ENCODE measurements at regions of chr19 and their contacts with region 1.

Region 1: DNA sequence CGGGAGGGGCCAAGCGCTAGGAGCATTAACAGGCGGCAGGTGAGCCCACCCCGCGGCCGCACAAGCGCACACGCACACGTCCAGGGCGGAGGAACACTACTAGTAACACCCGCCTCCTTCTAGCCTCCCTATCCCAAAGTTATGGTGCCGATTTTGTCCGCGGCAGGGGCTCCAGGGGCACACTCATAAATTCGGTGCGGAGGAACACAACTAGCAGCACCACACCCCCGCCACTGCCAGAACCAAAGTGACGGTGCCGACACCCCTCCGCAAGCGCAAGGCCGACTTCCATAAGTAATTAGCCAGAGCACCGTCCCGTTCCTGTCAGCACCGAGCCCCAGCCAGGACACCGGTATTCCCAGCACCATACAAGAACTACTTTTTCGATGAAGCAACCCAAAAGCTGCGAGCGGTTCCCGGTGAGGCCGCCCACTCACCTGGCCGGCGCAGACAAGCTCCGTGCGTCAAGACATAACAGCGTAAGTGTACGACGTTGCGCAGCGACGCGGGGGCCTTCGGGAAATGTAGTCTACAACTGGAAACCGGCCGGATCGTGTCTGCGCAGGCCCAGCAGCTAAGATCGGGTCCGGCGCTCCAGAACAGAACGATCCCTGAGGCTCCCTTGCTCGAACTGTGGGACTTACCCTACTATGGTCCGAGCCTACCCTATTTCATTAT is at the starts of genes ZNF540 and ZNF571:
- DNase-seq: peak; percentile 83 to 96 (median 91)
- ATAC-seq: peak; percentile 91 to 94
- H3K4me3 Mint-ChIP-seq: peak within 1 kb of the TSS; percentile 93 to 99 (median 98)
- H3K27ac Mint-ChIP-seq: peak within 1 kb of the TSS; percentile 96 to 100 (median 98)
- H3K4me1 Mint-ChIP-seq: peaks cover 31 to 41% (median 33%) of the 10 kb centered on the region in 4 donors
- H3K27me3 Mint-ChIP-seq: peaks cover 0 to 3% (median 0%) of the 10 kb centered on the region in 5 donors
- polyA plus RNA-seq, gene ZNF540: 6.6 to 9.1 (median 9.0) TPM
- polyA plus RNA-seq, gene ZNF571: 5.5 to 10.7 (median 6.6) TPM

Region 2: GRCh38 chr19:37513397-37513796 is 81.0 kb before region 1 on chr19:
- POLR2A ChIA-PET with region 1: no interaction called
- DNase-seq: no peak
- ATAC-seq: no peak
- H3K4me3 Mint-ChIP-seq: no peak overlapping the region
- H3K27ac Mint-ChIP-seq: peak overlapping the region in 1 of 10 donors; percentile 6
- H3K4me1 Mint-ChIP-seq: no peaks in the 10 kb centered on the region
- H3K27me3 Mint-ChIP-seq: no peaks in the 10 kb centered on the region

Region 3: DNA sequence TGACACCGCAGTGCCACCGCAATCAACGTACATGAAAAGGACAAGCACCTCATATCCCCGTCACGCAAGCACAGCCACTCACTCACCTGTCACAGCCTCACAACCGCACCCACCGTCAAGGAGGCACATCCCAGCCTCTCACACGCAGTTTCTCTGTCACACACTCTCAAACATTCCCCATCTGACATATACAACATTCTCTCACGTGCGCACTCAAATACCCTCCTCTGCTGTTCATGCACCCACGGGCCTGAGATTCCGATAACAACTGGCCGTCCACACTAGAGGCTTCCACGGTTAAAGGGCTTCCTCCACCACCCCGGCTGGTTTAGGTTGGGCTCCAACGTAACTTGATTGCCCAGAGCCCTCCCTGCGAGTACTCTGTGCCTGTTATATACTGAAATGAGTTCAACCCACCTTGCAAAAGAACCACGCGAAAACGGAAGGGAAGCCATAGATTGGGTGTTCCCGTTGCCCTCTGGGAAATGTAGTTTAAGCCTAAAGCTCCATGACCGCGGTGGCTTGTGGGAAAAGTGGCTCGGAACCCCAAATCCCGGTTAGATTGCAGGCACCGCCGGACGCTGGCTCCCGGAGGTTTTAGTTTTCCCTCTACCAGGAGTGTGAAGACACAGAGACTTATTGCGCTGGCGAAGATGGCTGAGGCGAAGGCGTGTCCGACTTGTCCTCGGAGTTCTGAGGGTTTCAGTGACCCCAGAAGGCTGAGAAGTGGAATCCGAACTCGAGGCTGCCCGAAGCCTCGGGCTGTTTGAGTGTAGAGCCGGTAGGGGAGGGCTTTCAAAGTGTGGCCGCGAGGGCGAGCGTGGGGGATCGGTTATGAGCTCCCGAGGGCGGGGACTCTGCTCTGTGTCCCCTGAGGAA is 184.9 kb after region 1 on chr19 and contains the start of gene ZNF573:
- POLR2A ChIA-PET with region 1: interaction called, 15 read pairs
- DNase-seq: peak; percentile 67 to 97 (median 94)
- ATAC-seq: peak; percentile 86 to 90
- H3K4me3 Mint-ChIP-seq: peak within 1 kb of the TSS; percentile 91 to 100 (median 95)
- H3K27ac Mint-ChIP-seq: peak within 1 kb of the TSS; percentile 96 to 100 (median 98)
- H3K4me1 Mint-ChIP-seq: peaks cover 18 to 51% (median 41%) of the 10 kb centered on the region in 4 donors
- H3K27me3 Mint-ChIP-seq: peaks cover 0 to 3% (median 0%) of the 10 kb centered on the region in 5 donors
- polyA plus RNA-seq, gene ZNF573: 6.7 to 14.0 (median 13.6) TPM